ENCODE measurements at regions of chr4 and their contacts with region 1.

Region 1: DNA sequence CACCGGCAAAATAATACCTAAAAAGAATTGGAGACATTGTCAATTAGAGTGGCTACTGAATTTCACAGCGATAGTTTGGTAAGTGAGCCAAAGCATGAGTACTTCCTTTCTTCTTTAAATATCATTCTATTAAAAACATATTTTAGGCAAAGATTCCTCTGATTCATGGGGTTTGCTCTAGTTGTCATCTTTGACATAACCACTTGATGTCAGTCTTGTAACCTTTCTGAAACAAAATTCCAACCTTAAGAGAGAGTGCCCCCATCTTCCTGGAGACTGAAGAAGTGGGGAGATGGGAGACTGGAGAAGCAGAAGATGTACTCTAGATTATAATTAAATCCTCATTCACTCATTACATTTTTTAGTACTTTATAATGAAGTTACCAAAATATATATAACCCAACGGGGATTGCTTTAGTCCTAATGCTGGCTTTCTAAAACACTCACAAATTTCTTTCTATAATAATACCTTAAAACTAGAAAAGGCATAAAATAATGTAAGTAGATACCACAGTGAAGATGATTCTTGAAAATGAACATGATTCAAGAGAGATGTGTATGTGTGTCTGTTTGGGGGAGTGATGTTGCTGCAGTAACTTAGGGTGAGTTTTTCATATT is 96.4 kb downstream of the EMCN start:
- DNase-seq: no peak
- H3K4me3 ChIP-seq: no peak overlapping the region
- H3K27ac ChIP-seq: no peak overlapping the region
- H3K4me1 ChIP-seq: no peaks in the 10 kb centered on the region
- H3K27me3 ChIP-seq: no peaks in the 10 kb centered on the region
- CTCF ChIP-seq: peak in 3 of 4 experiments; percentile 24 to 53 (median 45)
- POLR2A ChIP-seq: no peak

Region 2: GRCh38 chr4:100198061-100198460 is 223.4 kb before region 1 on chr4:
- intact Hi-C with region 1: no loop called
- DNase-seq: no peak
- H3K4me3 ChIP-seq: no peak overlapping the region
- H3K27ac ChIP-seq: no peak overlapping the region
- H3K4me1 ChIP-seq: no peaks in the 10 kb centered on the region
- H3K27me3 ChIP-seq: no peaks in the 10 kb centered on the region
- CTCF ChIP-seq: no peak
- POLR2A ChIP-seq: no peak

Region 3: DNA sequence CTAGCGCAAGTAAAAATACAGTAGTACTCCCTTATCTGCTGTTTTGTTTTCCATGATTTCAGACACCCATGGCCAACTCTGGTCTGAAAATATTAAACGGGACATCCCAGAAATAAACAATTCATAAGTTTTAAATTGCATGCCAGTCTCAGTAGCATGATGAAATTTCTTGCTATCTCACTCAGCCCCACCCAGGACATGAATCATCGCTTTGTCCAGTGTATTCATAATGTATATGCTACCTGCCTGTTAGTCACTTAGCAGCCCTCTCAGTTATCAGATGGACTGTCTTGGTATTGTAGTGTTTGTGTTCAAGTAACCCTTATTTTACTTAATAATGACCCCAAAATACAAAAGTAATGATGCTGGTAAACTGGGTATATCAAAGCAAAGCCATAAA is 73.0 kb before region 1 on chr4:
- intact Hi-C with region 1: no loop called
- DNase-seq: no peak
- H3K4me3 ChIP-seq: no peak overlapping the region
- H3K27ac ChIP-seq: no peak overlapping the region
- H3K4me1 ChIP-seq: no peaks in the 10 kb centered on the region
- H3K27me3 ChIP-seq: no peaks in the 10 kb centered on the region
- CTCF ChIP-seq: no peak
- POLR2A ChIP-seq: no peak

Region 4: GRCh38 chr4:100674976-100675375 is 253.5 kb after region 1 on chr4:
- intact Hi-C with region 1: no loop called
- DNase-seq: no peak
- H3K4me3 ChIP-seq: no peak overlapping the region
- H3K27ac ChIP-seq: no peak overlapping the region
- H3K4me1 ChIP-seq: no peaks in the 10 kb centered on the region
- H3K27me3 ChIP-seq: no peaks in the 10 kb centered on the region
- CTCF ChIP-seq: no peak
- POLR2A ChIP-seq: no peak

Region 5: DNA sequence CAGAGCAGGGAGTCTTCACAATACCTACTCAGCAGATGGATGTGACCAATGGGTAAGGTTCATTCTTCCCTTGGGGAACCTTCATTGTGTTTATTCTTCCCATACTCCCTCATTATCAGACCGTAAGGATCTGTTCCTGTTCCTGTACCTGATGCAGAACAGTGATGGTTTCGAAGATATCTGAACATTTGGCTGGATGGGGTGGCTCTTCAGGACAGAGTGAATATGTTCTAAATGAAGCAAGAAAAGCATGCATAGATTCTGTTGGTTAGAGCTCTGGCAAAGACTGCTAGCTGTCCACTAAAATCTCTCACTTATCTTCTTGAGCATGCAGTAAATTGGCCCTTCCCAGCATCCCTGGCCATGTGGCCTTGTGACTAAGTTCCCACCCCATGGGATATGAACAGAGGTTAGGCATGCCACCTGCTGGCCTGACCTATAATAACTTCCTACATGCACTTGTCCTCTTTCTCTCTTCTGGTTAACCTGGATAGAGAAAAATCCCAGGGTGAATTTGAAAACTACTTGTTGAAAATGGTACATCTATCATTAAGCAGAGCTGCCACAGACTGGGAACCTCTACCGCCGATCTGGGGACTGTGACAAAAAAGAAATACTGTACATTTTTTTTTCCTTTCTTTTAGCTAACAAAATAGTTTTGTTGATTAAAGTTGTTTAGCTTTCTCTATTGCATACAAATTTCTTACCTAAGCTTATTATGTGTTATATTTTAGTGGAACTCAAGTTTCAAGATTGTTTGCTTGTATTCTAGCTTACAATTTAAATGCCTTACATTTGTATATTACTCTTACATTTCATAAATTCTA is 1309.0 kb after region 1 on chr4:
- intact Hi-C with region 1: loop called (anchors 2 kb)
- DNase-seq: peak; percentile 63
- H3K4me3 ChIP-seq: no peak overlapping the region
- H3K27ac ChIP-seq: no peak overlapping the region
- H3K4me1 ChIP-seq: no peaks in the 10 kb centered on the region
- H3K27me3 ChIP-seq: no peaks in the 10 kb centered on the region
- CTCF ChIP-seq: peak; percentile 30 to 76 (median 61)
- POLR2A ChIP-seq: no peak

Region 6: GRCh38 chr4:102263011-102263787 is 1841.7 kb after region 1 on chr4:
- intact Hi-C with region 1: loop called (anchors 2 kb)
- DNase-seq: peak; percentile 38
- H3K4me3 ChIP-seq: no peak overlapping the region
- H3K27ac ChIP-seq: no peak overlapping the region
- H3K4me1 ChIP-seq: no peaks in the 10 kb centered on the region
- H3K27me3 ChIP-seq: no peaks in the 10 kb centered on the region
- CTCF ChIP-seq: peak in 3 of 4 experiments; percentile 55 to 72 (median 62)
- POLR2A ChIP-seq: no peak